ENCODE measurements at regions of chrX and their contacts with region 1.

Region 1: DNA sequence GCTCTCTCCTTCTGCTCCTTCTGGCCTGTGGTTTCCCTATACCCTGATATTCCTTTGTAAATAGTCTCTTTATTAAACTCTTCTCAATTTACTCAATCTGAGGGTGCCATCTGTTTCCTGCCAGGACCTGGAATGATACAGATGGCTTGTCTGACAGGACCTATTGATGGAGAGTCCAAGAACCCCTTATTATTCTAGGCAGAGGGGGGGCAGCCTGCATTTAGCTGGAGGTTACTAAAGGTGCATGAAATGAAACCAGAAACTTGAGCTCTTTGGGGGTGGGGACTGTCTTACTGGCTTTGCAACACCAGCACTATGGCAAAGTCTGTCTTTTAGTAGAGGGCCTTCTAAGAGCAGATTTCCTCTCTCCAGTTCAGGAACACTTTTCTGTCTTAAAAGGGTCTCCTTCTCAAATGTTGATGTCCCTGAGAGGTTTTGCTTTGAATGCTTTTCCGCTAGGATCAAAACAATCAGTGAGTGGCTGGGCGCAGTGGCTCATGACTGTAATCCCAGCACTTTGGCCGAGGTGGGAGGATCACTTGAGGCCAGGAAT is 162.5 kb upstream of the MED14 start:
- DNase-seq: no peak
- ATAC-seq: no peak
- H3K4me3 ChIP-seq: no peak overlapping the region
- H3K27ac ChIP-seq: no peak overlapping the region
- H3K4me1 ChIP-seq: peaks cover 20% of the 10 kb centered on the region
- H3K27me3 ChIP-seq: no peaks in the 10 kb centered on the region
- CTCF ChIP-seq: no peak

Region 2: DNA sequence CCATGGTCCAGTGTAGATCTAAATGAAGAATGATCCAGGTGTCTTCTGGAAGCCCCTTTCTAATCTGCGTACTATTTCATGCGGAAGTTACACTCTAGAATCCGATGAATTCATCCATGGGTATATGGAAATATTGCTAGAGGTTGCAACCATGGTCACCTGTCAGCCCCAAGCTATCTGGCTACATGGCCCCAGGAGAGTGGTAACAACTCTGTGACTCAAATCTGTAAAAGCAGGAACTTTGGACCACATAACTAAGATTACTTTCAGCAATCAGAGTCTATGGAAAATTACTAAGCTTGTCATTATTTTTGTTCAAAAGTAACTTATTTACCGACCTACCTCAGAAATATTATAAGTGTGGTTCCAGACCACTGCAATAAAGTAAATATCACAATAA is 11.8 kb before region 1 on chrX:
- CTCF ChIA-PET with region 1: no interaction called
- POLR2A ChIA-PET with region 1: interaction called, 14 read pairs
- intact Hi-C with region 1: no loop called
- DNase-seq: no peak
- ATAC-seq: peak; percentile 58
- H3K4me3 ChIP-seq: no peak overlapping the region
- H3K27ac ChIP-seq: no peak overlapping the region
- H3K4me1 ChIP-seq: peaks cover 14% of the 10 kb centered on the region; the same call in 1 of the 2 replicates
- H3K27me3 ChIP-seq: no peaks in the 10 kb centered on the region
- CTCF ChIP-seq: no peak

Region 3: GRCh38 chrX:41010188-41010846 is 112.5 kb after region 1 on chrX:
- CTCF ChIA-PET with region 1: no interaction called
- POLR2A ChIA-PET with region 1: no interaction called
- intact Hi-C with region 1: loop called (anchors 10 kb)
- DNase-seq: peak; percentile 91
- ATAC-seq: peak; percentile 80
- H3K4me3 ChIP-seq: peak overlapping the region; percentile 52
- H3K27ac ChIP-seq: peak overlapping the region; percentile 94
- H3K4me1 ChIP-seq: peaks cover 21% of the 10 kb centered on the region
- H3K27me3 ChIP-seq: no peaks in the 10 kb centered on the region
- CTCF ChIP-seq: no peak

Region 4: DNA sequence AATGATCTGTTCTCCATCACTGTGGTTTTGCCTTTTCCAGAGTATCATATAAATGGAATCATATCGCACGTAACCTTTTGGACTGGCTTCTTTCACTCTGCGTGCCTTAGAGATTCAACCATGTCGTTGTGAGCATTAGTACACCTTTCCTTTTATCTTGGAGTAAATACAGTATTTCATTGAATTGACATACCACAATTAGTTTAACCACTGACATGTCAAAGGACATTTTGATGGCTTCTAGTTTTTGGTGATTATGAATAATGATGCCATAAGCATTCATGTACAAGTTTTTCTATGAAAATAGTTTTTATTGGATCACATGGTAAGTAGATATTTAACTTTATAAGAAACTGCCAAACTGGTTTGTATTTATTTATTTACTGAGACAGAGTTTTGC is 471.4 kb after region 1 on chrX:
- CTCF ChIA-PET with region 1: no interaction called
- POLR2A ChIA-PET with region 1: no interaction called
- intact Hi-C with region 1: no loop called
- DNase-seq: no peak
- ATAC-seq: no peak
- H3K4me3 ChIP-seq: no peak overlapping the region
- H3K27ac ChIP-seq: no peak overlapping the region
- H3K4me1 ChIP-seq: no peaks in the 10 kb centered on the region
- H3K27me3 ChIP-seq: no peaks in the 10 kb centered on the region
- CTCF ChIP-seq: no peak